ENCODE measurements at regions of chr5 and their contacts with region 1.

Region 1: GRCh38 chr5:174424219-174425053 is 299.9 kb upstream of the MSX2 start:
- DNase-seq: no peak
- ATAC-seq: no peak
- H3K4me3 ChIP-seq: no peak overlapping the region
- H3K27ac ChIP-seq: no peak overlapping the region
- H3K4me1 ChIP-seq: no peaks in the 10 kb centered on the region
- H3K27me3 ChIP-seq: no peaks in the 10 kb centered on the region

Region 2: DNA sequence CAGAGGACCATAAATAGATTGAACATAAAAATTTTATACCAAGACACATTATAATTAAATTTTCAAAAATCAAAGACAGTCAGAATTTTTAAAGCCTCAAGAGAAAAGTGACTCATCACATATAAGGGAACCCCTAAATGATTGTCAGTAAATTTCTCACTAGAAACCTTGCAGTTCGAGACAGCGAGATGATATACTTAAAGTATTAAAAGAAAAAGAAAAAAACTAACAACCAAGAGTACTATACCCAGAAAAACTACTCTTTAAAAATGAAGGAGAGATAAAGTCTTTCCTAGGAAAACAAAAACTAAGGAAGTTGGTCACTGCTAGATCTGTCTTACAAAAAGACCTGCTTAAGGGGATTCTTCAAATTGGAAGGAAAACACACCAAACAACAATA is 48.5 kb after region 1 on chr5:
- intact Hi-C with region 1: no loop called
- DNase-seq: no peak
- ATAC-seq: no peak
- H3K4me3 ChIP-seq: no peak overlapping the region
- H3K27ac ChIP-seq: no peak overlapping the region
- H3K4me1 ChIP-seq: no peaks in the 10 kb centered on the region
- H3K27me3 ChIP-seq: no peaks in the 10 kb centered on the region

Region 3: DNA sequence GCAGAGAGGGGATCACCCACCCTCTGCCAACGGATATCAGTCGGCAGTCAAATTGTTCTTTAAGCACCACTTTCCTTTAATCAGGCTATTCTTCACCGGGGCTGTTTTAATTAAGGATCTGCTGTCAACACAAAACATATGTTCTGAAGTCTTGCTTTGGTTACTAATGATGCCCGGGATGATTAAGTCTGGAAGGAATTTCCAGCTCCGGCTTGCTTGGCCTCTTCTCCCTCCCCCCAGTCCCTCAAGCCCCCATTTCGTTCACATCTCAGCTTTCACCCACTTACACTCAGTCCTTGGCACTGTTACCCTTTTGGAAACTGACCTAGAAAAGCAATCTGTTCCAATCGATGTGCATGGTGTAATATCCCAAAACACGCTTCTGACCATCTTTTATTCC is 374.7 kb after region 1 on chr5:
- intact Hi-C with region 1: loop called in 3 of 4 experiments (anchors 5 to 10 kb)
- DNase-seq: no peak
- ATAC-seq: no peak
- H3K4me3 ChIP-seq: no peak overlapping the region
- H3K27ac ChIP-seq: no peak overlapping the region
- H3K4me1 ChIP-seq: no peaks in the 10 kb centered on the region
- H3K27me3 ChIP-seq: no peaks in the 10 kb centered on the region

Measured in right cardiac atrium (tissue), 5 donors.